Common myeloid progenitor, CD34-positive (primary cell): ENCODE measurements at regions of chr1 and their contacts with region 1.

Region 1: DNA sequence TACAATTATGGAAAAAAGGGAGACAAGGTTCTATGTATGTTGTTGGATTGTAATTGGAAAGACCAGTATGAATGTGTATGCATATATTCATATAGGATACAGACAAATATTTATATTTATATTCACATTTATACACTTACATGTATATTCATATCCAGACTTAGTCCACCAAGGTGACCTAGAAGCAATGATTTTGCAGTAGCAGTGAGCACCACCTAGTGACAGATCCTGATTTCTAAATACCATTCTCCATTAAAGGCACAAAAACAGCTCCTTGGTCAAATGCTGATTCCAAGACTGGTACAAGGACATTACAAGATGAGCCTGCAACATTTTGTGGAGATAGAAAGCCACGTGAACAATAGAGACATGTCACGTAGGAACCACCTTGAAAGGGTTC is 153.4 kb downstream of the SDCCAG8 start:
- DNase-seq: peak; percentile 34 to 68 (median 55)
- H3K4me3 ChIP-seq: no peak overlapping the region
- H3K27ac ChIP-seq: no peak overlapping the region
- H3K4me1 ChIP-seq: no peaks in the 10 kb centered on the region
- H3K27me3 ChIP-seq: no peaks in the 10 kb centered on the region

Region 2: DNA sequence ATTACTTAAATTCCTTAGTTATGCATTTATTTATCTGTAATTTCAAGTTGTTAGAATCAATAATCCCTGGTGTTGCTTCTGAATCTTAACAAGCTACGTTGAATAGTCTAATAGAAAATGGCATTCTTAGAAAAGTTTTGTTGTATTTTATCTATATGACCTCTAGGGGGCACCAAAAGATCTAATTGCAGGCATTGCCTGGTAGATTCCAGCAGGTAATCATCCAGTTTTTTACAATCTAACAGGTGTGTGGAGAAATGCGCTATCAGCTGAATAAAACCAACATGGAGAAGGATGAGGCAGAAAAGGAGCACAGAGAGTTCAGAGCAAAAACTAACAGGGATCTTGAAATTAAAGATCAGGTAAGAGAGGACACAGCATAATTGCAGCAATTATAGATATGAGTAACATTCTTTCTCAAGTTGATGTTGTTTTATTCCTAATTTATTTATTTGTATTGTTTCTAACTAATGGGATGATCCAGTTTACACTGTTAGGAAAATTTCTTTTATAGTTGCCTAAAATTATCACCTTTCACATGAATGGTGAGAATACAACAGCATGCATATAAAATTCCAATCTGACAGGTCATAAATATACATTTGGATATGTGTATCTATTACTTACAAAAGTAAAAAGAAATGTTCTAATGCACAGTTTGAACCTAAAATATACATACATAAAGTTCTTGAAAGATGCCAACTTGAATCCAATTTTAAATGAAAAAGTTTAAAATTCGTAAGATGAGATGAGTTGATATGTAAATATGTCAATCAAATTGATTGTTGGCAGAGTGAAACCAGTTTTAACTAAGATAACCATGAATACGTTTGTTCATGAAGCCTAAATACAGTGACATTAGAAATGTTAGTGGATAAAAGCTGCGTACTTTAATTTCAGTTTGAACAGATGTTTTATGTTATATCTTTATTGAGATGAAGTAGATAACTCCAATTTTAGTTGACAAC is 65.0 kb before region 1 on chr1:
- CTCF ChIA-PET with region 1: interaction called, 49 read pairs
- POLR2A ChIA-PET with region 1: no interaction called
- DNase-seq: peak; percentile 52 to 71 (median 62)
- H3K4me3 ChIP-seq: no peak overlapping the region
- H3K27ac ChIP-seq: no peak overlapping the region
- H3K4me1 ChIP-seq: no peaks in the 10 kb centered on the region
- H3K27me3 ChIP-seq: no peaks in the 10 kb centered on the region

Region 3: DNA sequence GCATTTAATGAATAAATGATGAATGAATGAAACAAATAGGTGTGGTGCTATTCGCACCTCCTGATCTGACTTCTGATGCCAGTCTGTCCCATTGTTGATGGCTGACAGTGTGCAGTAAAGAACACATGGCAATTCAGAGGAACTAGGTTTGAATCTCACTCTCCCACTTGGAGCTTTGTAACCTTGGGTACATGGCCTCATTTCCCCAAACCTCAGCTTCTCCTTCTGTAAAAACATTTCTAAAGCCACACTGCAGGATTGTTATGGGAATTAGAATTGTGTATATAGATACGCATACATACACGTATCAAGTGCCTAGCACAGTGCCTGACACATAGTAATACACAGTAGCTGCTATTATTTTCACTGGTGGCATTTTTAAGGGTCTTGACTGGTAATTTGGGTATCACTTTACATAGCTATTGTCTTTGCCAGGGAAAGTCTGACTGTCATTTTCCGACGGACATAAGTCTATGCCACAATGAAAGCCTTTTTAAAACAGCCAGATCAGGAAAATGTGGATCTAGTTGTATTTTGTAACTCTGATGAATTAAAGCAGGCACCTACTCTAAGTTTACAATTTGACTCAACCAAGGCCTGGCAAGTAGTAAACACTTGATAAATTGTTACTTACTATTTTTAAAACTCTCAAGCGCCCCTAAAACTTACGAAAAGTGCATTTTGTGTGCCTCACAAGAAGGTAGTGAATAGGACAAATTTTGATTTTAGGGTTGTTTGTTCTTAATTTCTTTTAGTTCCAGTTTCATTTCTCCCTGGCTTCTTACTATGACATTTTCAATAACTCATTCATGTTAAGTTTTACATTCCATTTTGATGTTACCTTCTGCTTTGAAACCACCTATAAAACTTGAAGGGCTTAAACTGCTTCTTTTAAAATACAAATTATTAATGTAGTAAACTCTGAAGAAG is 11.0 kb after region 1 on chr1:
- CTCF ChIA-PET with region 1: interaction called, 21 read pairs
- POLR2A ChIA-PET with region 1: interaction called, 3 read pairs
- DNase-seq: peak in 2 of 3 donors; percentile 28 to 32
- H3K4me3 ChIP-seq: peak overlapping the region in 1 of 7 experiments; percentile 31
- H3K27ac ChIP-seq: no peak overlapping the region
- H3K4me1 ChIP-seq: peaks cover 14 to 33% (median 22%) of the 10 kb centered on the region in 4 experiments
- H3K27me3 ChIP-seq: no peaks in the 10 kb centered on the region